GM18951 (cell line): ENCODE measurements at regions of chr14 and their contacts with region 1.

Region 1: DNA sequence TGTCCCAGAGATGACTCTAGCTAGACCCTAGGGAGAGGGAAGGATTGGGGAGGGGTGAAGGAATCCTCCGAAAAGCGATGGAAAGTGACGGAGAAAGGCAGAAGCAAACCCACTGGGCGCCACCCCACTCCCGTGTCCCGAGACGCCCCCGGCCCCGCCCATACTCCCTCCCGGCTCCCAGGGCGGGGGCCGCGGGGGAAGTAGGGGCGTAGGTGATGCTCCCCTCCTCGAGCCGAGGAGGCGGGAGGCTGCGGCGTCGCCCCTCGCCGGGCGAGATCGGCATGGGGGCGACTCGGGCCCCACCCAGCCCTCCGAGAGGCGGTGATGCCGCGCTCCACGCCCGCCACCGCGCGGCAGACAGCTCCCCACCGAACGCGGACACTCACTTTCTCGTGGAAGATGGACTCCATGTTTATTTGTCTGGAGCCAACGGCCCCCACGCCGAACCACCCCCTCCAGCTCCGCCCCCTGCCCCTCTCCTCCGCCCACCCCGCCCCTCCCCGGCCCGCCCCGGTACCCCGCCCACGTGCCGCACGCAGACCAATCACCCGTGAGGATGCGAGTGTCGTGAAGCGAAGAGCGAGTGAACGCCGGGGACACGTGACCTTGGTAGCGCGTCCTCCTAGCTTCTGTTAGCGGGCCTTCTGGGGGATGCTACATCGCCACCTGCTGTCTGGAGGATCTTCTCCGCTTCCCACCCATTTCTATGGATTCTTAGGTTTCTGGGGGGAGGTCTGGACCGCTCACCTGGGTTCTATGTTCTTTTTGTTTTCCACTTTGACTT is at the start of gene ATXN3:
- POLR2A ChIP-seq: peak; percentile 71

Region 2: DNA sequence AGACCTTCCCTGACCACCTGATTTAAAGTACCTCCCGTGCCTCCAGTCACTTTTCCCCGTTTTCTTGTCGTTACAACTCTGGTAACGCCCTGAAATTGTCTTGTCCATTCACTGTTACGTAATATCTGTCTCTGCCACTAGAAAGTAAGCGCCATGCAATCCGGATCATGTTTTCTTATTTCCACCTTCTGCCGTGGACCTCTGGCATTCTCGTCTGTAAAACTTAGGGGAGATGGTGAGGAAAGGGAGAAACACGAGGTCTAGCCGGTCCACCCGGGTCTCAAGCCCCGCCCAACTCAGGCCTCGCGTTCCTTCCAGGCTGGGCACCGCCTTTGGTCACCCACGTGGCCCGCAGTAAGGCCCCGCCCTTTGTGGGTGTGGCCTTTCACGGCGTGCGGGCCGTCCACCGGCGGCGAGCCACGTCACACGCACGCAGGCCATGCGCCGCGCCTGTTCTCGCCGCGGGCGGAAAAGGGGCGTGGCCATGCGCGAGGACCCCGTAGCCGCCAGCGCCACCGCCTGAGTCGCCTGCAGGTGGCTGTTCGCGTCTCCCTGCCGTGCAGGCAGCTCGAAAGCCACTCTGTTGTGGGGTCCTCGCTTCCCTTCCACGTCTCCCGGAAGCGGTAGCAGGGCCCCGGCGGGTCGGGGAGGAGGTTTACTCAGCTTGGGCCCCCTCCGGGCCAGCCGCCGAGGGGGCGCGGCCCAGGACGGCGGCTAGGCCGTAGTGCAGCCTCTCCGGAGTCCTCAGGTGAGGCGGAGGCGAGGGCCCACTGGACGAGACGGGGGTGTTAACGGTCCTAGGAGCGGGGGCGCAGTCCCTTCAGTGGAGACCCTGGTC is 687.6 kb after region 1 on chr14 and contains the start of gene GOLGA5:
- in situ Hi-C with region 1: loop called (anchors 25 kb)
- POLR2A ChIP-seq: peak; percentile 87